Activated CD8-positive, alpha-beta memory T cell treated with anti-CD3 and anti-CD28 coated beads, Interleukin-2, amount 10 ng/mL, durations not matched to agents 7 days and 5 days (primary cell): ENCODE measurements at regions of chr1 and their contacts with region 1.

Region 1: DNA sequence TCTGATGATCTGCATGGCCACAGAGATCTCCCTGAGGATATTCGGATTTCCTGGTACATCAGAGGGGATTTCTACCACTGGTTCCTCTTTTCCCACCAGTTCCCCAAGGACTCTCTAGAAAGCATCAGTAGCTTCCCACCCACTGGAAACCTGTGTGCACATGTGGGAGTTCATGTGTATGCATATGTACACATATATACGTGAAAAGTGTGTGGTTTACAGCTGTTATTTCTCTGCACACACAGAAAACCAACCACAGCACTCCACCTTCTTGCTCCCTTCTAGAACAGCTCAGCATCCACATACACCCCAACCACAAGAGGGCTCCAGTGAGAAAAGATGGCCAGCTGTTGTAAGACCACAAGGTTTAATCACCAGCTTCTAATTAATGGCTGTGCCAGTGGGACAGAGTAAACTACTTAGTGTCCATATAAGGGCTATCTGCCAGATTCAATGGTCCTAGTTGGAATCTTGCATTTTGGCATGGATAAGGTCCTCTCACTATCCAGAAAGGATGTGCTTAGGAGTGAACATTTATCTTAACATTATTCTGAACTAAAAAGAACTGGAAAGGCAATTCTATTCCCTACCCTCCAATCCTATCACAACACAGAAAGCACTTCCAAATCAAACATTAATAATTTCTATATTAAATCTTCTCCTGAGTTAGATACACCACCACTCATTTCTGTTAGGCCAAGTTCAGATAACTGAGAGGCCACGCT is 24.1 kb downstream of the GPR3 start:
- DNase-seq: peak; percentile 78
- ATAC-seq: peak; percentile 57
- H3K4me3 Mint-ChIP-seq: no peak overlapping the region
- H3K27ac Mint-ChIP-seq: peak overlapping the region; percentile 44
- H3K4me1 Mint-ChIP-seq: peaks cover 43% of the 10 kb centered on the region
- H3K27me3 Mint-ChIP-seq: no peaks in the 10 kb centered on the region

Region 2: GRCh38 chr1:27430903-27431600 is 14.5 kb after region 1 on chr1:
- CTCF ChIA-PET with region 1: interaction called, 10 read pairs
- DNase-seq: no peak
- ATAC-seq: peak; percentile 75
- H3K4me3 Mint-ChIP-seq: no peak overlapping the region
- H3K27ac Mint-ChIP-seq: peak overlapping the region; percentile 77
- H3K4me1 Mint-ChIP-seq: peaks cover 39% of the 10 kb centered on the region
- H3K27me3 Mint-ChIP-seq: no peaks in the 10 kb centered on the region

Region 3: DNA sequence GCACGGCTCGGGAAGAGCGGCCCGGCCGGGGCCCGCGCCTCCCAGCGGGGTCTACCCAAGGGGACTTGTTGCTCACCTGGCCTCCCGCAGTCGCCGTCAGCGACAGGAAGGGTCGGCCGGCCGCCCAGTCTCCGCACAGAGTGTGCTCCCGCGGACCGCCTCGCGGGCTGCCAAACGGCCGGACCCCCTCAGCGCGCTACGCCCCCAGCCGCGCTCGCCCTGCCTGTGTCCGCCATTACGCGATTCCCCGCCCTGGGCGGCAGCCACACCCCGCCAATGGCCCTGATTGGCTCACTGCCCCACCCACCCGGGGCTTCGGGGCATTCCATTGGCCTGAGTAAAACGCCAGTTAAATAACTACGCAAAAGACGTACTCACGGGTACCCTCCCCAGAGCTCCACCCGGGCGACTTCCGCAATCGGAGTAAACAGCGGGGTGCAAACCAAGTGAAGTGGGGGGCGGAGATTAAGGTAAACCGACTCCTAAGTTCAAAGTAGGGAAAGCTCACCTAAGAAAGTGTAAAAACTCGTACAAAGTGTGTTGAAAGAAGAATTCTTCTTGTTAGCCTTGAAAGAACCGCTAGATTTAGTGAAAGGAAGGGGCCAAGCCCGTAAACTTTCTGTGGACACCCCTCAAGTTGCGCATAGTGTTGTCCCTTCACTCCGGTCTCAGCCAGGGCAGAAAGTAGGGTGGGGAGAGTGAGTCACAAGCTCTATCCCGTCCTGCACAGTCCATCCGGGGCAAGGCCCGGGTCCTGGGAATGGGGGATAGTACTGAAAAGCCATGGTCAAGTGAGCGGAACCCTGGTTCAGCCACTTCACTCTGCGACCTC is 73.6 kb after region 1 on chr1 and contains the start of gene WASF2:
- CTCF ChIA-PET with region 1: interaction called, 10 read pairs
- DNase-seq: peak; percentile 98
- ATAC-seq: peak; percentile 93
- H3K4me3 Mint-ChIP-seq: peak within 1 kb of the TSS; percentile 96
- H3K27ac Mint-ChIP-seq: peak within 1 kb of the TSS; percentile 100
- H3K4me1 Mint-ChIP-seq: peaks cover 31% of the 10 kb centered on the region
- H3K27me3 Mint-ChIP-seq: no peaks in the 10 kb centered on the region
- total RNA-seq, gene WASF2: 113 to 117 TPM

Region 4: GRCh38 chr1:27603681-27604578 is 187.4 kb after region 1 on chr1 and contains the start of gene AHDC1:
- CTCF ChIA-PET with region 1: interaction called, 10 read pairs
- DNase-seq: peak; percentile 93
- ATAC-seq: peak; percentile 90
- H3K4me3 Mint-ChIP-seq: peak within 1 kb of the TSS; percentile 94
- H3K27ac Mint-ChIP-seq: peak within 1 kb of the TSS; percentile 70
- H3K4me1 Mint-ChIP-seq: peaks cover 37% of the 10 kb centered on the region
- H3K27me3 Mint-ChIP-seq: no peaks in the 10 kb centered on the region
- total RNA-seq, gene AHDC1: 15.8 to 18.5 TPM

Region 5: GRCh38 chr1:27634177-27634984 is 217.8 kb after region 1 on chr1:
- CTCF ChIA-PET with region 1: no interaction called
- DNase-seq: peak; percentile 64
- ATAC-seq: peak; percentile 46
- H3K4me3 Mint-ChIP-seq: peak overlapping the region; percentile 26
- H3K27ac Mint-ChIP-seq: peak overlapping the region; percentile 27
- H3K4me1 Mint-ChIP-seq: peaks cover 70% of the 10 kb centered on the region
- H3K27me3 Mint-ChIP-seq: peaks cover 7% of the 10 kb centered on the region